ENCODE measurements at regions of chr3 and their contacts with region 1.

Region 1: GRCh38 chr3:24963762-24964625 is 464.1 kb upstream of the RARB start:
- DNase-seq: no peak
- ATAC-seq: no peak
- H3K4me3 ChIP-seq: no peak overlapping the region
- H3K27ac ChIP-seq: no peak overlapping the region
- H3K4me1 ChIP-seq: no peaks in the 10 kb centered on the region
- H3K27me3 ChIP-seq: no peaks in the 10 kb centered on the region
- CTCF ChIP-seq: peak; percentile 33 to 68 (median 55)
- POLR2A ChIP-seq: no peak

Region 2: DNA sequence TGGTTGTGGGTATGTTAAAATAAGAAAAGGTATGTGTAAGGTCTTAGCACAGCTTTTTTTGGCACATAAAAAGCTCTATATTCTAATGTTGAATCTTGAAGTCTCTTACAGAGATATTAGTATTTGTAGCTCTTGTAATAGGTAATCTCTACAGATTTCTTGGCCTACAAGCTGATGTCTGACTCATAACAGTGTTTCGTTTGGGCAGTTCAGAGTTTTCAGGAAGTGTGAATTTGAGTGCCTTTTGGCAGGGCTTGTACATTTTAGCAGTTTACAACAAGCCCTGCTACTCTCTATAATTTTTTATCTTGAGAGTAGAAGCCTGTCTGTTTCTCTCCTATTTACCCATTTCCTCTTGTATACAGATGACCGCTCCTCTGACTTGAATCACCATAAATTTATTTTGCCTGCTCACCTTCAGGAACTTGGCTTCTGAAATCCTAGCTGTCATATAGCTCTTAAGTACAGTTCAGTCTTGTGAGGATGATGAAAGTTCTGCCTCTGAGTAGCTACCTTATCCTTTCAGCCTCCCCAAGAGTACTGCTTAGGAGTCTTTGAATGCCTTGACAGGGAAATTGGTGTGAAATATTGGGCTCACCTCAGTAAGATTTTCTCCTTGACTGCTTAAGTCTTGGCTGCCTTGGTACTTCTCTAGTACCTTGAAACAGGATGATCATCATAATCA is 44.1 kb after region 1 on chr3:
- intact Hi-C with region 1: no loop called
- DNase-seq: no peak
- ATAC-seq: peak in 3 of 4 donors; percentile 55 to 69 (median 58)
- H3K4me3 ChIP-seq: no peak overlapping the region
- H3K27ac ChIP-seq: peak overlapping the region in 1 of 12 donors; percentile 14
- H3K4me1 ChIP-seq: peaks cover 0 to 13% (median 3%) of the 10 kb centered on the region in 12 donors
- H3K27me3 ChIP-seq: no peaks in the 10 kb centered on the region
- CTCF ChIP-seq: no peak
- POLR2A ChIP-seq: no peak

Region 3: GRCh38 chr3:25033407-25034029 is 69.5 kb after region 1 on chr3:
- intact Hi-C with region 1: loop called in 2 of 10 experiments (anchors 5 kb)
- DNase-seq: peak in 4 of 5 donors; percentile 54 to 77 (median 62)
- ATAC-seq: peak; percentile 74 to 86 (median 82)
- H3K4me3 ChIP-seq: no peak overlapping the region
- H3K27ac ChIP-seq: no peak overlapping the region
- H3K4me1 ChIP-seq: peaks cover 0 to 20% (median 11%) of the 10 kb centered on the region in 12 donors
- H3K27me3 ChIP-seq: no peaks in the 10 kb centered on the region
- CTCF ChIP-seq: peak; percentile 55 to 74 (median 60)
- POLR2A ChIP-seq: no peak

Region 4: GRCh38 chr3:25094932-25095685 is 131.1 kb after region 1 on chr3:
- intact Hi-C with region 1: loop called in 6 of 10 experiments (anchors 2 to 10 kb)
- DNase-seq: no peak
- ATAC-seq: no peak
- H3K4me3 ChIP-seq: no peak overlapping the region
- H3K27ac ChIP-seq: no peak overlapping the region
- H3K4me1 ChIP-seq: peaks cover 0 to 1% (median 0%) of the 10 kb centered on the region in 12 donors
- H3K27me3 ChIP-seq: no peaks in the 10 kb centered on the region
- CTCF ChIP-seq: peak in 6 of 12 donors; percentile 6 to 40 (median 32)
- POLR2A ChIP-seq: no peak

Measured in heart left ventricle (tissue), 16 donors.